ENCODE measurements at regions of chr15 and their contacts with region 1.

Region 1: DNA sequence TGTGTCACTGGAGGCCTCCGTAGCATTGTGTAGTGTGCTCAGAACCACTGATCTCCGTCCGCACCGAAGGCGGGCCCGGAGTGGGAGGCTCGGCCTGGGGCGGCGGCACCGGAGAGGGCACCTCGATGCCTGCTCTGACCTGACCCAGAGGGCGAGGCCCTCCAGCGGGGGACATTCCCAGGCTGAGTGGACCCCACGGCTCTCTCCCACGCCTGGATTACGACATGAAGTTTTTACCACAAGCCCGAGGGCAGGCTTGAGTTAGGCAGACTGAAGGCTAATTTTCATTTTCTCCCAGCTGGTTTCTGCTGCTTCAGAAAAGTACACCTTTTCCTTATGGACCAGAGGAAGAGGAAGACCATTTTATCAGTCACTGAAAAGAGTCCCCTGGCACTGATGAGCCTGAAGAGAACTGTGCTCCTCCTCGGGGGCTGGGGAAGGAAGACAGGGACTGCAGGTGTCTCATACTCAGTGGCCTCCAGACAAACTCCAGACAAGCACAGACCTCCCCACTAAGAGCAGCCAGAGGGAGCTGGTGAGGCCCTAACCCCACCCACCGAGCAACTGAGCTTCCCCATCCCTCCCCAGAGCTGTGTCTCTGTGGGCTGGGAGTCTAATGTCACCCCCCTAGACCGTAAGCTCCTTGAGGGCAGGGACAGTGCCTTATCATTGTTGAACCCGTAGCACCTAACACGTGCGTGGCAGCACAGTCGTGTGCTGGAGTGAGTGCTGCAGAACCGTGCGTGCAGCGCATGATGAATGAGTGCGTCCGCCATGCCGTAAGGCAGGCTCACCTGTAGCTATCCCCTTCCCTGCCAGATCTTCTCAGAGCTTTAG is 74.5 kb upstream of the BLM start:
- DNase-seq: no peak
- H3K4me3 ChIP-seq: no peak overlapping the region
- H3K27ac ChIP-seq: no peak overlapping the region
- H3K4me1 ChIP-seq: peaks cover 0 to 6% (median 0%) of the 10 kb centered on the region in 4 experiments; a peak in 4 of 7 replicates
- H3K27me3 ChIP-seq: no peaks in the 10 kb centered on the region; a peak in 1 of 7 replicates
- CTCF ChIP-seq: peak; percentile 21 to 55 (median 48); a peak in 3 of 4 replicates
- EP300 ChIP-seq: no peak
- POLR2A ChIP-seq: no peak
- RAD21 ChIP-seq: peak; percentile 15 to 30; a peak in 2 of 4 replicates

Region 2: DNA sequence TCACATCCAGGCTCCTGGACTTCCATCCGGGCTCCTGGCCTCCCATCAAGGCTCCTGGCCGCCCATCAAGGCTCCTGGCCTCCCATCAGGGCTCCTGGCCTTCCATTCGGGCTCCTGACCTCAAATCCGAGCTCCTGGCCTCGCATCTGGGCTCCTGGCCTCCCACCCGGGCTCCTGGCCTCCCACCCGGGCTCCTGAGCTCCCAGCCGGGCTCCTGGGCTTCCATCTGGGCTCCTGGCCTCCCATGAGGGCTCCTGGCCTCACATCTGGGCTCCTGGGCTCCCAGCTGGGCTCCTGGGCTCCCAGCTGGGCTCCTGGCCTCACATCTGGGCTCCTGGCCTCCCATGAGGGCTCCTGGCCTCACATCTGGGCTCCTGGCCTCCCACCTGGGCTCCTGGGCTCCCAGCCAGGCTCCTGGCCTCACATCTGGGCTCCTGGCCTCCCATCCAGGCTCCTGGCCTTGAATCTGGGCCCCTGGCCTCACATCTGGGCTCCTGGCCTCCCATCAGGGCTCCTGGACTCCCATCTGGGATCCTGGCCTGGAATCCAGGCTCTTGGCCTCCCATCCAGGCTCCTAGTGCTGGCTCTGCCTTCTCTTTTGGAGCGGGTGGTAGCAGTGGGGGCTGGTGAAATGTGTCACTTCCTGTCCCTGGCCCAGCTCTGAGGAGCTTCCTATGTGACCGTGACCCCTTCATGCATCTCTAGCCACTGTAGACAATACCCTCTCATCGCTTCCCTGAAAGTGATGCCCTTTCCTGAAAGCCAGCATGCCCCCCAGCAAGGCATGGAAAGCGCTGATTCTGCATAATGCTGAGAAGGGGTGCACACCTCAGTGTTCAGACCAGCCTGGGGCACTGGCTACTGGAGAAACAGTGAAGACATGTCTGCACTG is 11.8 kb after region 1 on chr15:
- CTCF ChIA-PET with region 1: interaction called, 12 read pairs
- POLR2A ChIA-PET with region 1: no interaction called
- DNase-seq: no peak
- H3K4me3 ChIP-seq: no peak overlapping the region
- H3K27ac ChIP-seq: no peak overlapping the region
- H3K4me1 ChIP-seq: no peaks in the 10 kb centered on the region
- H3K27me3 ChIP-seq: no peaks in the 10 kb centered on the region; a peak in 2 of 7 replicates
- CTCF ChIP-seq: no peak
- EP300 ChIP-seq: no peak
- POLR2A ChIP-seq: no peak
- RAD21 ChIP-seq: no peak

Measured in H1 (cell line).